ENCODE measurements at regions of chrX and their contacts with region 1.

Region 1: DNA sequence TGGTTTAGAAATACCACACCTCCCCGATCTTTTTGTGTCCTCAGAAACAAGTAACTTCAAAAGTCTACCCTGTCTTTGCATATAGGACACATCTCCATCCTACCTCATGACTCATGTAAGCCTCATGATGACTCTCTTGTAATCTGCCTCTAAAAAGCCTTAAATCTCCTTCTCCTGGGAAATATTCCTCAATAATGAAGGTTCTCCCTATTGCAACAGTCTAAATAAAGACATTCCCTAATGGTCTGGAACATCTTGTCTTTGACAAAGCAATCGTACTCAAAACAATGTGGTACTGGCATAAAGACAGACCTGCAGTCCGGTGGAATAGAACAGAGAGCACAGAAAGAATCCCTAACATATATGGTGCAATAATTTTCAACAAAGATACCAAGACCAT is 257.7 kb downstream of the OPHN1 start:
- DNase-seq: no peak
- ATAC-seq: no peak
- H3K4me3 ChIP-seq: no peak overlapping the region
- H3K4me3 Mint-ChIP-seq: no peak overlapping the region
- H3K27ac ChIP-seq: no peak overlapping the region
- H3K27ac Mint-ChIP-seq: no peak overlapping the region
- H3K4me1 ChIP-seq: no peaks in the 10 kb centered on the region
- H3K4me1 Mint-ChIP-seq: peaks cover 0 to 22% (median 2%) of the 10 kb centered on the region in 7 donors
- H3K27me3 ChIP-seq: no peaks in the 10 kb centered on the region
- H3K27me3 Mint-ChIP-seq: no peaks in the 10 kb centered on the region

Region 2: GRCh38 chrX:68196939-68197791 is 21.6 kb after region 1 on chrX:
- CTCF ChIA-PET with region 1: no interaction called
- POLR2A ChIA-PET with region 1: no interaction called
- intact Hi-C with region 1: no loop called
- DNase-seq: peak in 5 of 9 donors; percentile 13 to 19 (median 16)
- ATAC-seq: peak; percentile 63
- H3K4me3 ChIP-seq: no peak overlapping the region
- H3K4me3 Mint-ChIP-seq: no peak overlapping the region
- H3K27ac ChIP-seq: no peak overlapping the region
- H3K27ac Mint-ChIP-seq: no peak overlapping the region
- H3K4me1 ChIP-seq: no peaks in the 10 kb centered on the region
- H3K4me1 Mint-ChIP-seq: peaks cover 0 to 17% (median 2%) of the 10 kb centered on the region in 7 donors
- H3K27me3 ChIP-seq: no peaks in the 10 kb centered on the region
- H3K27me3 Mint-ChIP-seq: peaks cover 0 to 3% (median 0%) of the 10 kb centered on the region in 5 donors

Region 3: GRCh38 chrX:68238568-68238967 is 63.0 kb after region 1 on chrX:
- CTCF ChIA-PET with region 1: no interaction called
- POLR2A ChIA-PET with region 1: no interaction called
- intact Hi-C with region 1: loop called in 1 of 2 experiments (anchors 2 kb)
- DNase-seq: no peak
- ATAC-seq: no peak
- H3K4me3 ChIP-seq: no peak overlapping the region
- H3K4me3 Mint-ChIP-seq: no peak overlapping the region
- H3K27ac ChIP-seq: no peak overlapping the region
- H3K27ac Mint-ChIP-seq: no peak overlapping the region
- H3K4me1 ChIP-seq: no peaks in the 10 kb centered on the region
- H3K4me1 Mint-ChIP-seq: no peaks in the 10 kb centered on the region
- H3K27me3 ChIP-seq: no peaks in the 10 kb centered on the region
- H3K27me3 Mint-ChIP-seq: no peaks in the 10 kb centered on the region

Region 4: DNA sequence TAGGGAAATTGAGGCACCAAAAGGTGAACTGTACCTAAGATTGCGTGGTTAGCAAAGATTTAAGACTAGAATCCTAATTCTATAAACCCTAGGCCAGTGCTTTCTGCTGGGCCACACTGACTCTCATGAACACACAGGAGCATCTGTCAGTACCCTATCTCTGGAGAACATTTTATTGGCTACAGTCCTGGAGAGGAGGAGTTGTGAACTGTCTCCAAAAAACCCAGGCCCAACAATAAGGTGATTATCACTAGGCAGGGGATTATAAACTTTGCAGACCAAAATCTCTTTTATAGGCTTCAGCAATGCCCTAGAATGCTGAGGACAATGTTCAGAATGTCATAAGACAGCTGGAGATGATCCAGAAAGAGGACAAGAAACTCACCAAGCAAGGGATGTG is 233.6 kb after region 1 on chrX:
- CTCF ChIA-PET with region 1: no interaction called
- POLR2A ChIA-PET with region 1: no interaction called
- intact Hi-C with region 1: no loop called
- DNase-seq: no peak
- ATAC-seq: no peak
- H3K4me3 ChIP-seq: no peak overlapping the region
- H3K4me3 Mint-ChIP-seq: no peak overlapping the region
- H3K27ac ChIP-seq: no peak overlapping the region
- H3K27ac Mint-ChIP-seq: no peak overlapping the region
- H3K4me1 ChIP-seq: no peaks in the 10 kb centered on the region
- H3K4me1 Mint-ChIP-seq: no peaks in the 10 kb centered on the region
- H3K27me3 ChIP-seq: no peaks in the 10 kb centered on the region
- H3K27me3 Mint-ChIP-seq: no peaks in the 10 kb centered on the region

Region 5: DNA sequence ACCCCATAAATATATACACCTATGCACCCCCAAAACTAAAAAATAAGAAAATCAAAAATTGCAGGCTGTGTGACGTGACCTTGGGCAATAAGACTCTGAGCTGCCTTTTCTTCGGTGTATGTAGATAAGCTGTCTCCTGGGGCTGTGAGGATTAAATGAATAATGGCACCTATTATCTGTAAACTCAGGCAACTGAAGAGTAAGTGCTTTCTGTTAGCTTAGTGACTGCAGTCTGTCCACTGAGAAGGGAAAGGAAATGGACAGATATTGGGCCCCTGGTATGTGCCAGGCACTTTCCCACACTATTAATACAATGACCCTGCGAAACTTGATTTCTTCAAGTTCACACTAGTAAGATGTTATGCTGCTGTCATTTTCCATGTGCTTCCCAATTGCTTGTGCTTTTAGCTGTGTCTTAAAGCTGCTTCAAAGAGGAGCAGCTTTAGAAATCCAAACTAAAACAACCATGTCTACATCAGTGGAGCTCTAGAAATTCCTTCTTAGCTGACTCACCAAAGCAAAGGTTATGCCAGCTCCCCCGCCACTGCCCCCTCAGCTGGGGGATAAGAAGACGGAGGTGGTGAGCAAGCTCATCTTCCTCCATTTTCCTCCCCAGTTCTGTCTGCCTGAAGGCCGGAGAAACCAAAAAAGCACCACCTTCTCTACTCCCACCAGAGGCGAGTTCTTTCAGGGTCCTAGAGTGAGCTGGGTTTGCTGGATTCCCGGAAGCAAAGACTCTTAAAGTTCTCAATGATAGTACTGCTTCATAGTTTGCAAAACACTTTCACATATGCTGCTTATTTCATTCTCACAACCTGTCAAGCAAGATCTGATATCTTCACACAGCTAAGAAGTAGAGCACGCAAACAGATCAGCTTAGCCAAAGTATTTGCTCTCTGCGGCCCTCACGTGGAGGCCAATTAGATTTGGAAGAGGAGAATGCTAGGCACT is 1993.0 kb after region 1 on chrX:
- CTCF ChIA-PET with region 1: no interaction called
- POLR2A ChIA-PET with region 1: no interaction called
- intact Hi-C with region 1: no loop called
- DNase-seq: no peak
- ATAC-seq: no peak
- H3K4me3 ChIP-seq: no peak overlapping the region
- H3K4me3 Mint-ChIP-seq: no peak overlapping the region
- H3K27ac ChIP-seq: no peak overlapping the region
- H3K27ac Mint-ChIP-seq: no peak overlapping the region
- H3K4me1 ChIP-seq: no peaks in the 10 kb centered on the region
- H3K4me1 Mint-ChIP-seq: peaks cover 0 to 10% (median 0%) of the 10 kb centered on the region in 7 donors
- H3K27me3 ChIP-seq: no peaks in the 10 kb centered on the region
- H3K27me3 Mint-ChIP-seq: no peaks in the 10 kb centered on the region

Measured in naive thymus-derived CD4-positive, alpha-beta T cell (primary cell).